ENCODE measurements at regions of chr22 and their contacts with region 1.

Region 1: GRCh38 chr22:36387752-36388518 is at the start of gene MYH9:
- DNase-seq: peak; percentile 100
- ATAC-seq: peak; percentile 85
- H3K4me3 Mint-ChIP-seq: peak within 1 kb of the TSS; percentile 88
- H3K27ac Mint-ChIP-seq: peak within 1 kb of the TSS; percentile 92
- H3K4me1 Mint-ChIP-seq: peaks cover 45% of the 10 kb centered on the region
- H3K27me3 Mint-ChIP-seq: no peaks in the 10 kb centered on the region
- total RNA-seq, gene MYH9: 857 to 883 TPM

Region 2: GRCh38 chr22:36359181-36359996 is 28.5 kb before region 1 on chr22:
- CTCF ChIA-PET with region 1: interaction called, 12 read pairs
- POLR2A ChIA-PET with region 1: interaction called, 15 read pairs
- DNase-seq: no peak
- ATAC-seq: no peak
- H3K4me3 Mint-ChIP-seq: peak overlapping the region; percentile 13
- H3K27ac Mint-ChIP-seq: peak overlapping the region; percentile 74
- H3K4me1 Mint-ChIP-seq: peaks cover 94% of the 10 kb centered on the region
- H3K27me3 Mint-ChIP-seq: no peaks in the 10 kb centered on the region

Region 3: GRCh38 chr22:36365020-36365411 is 22.9 kb before region 1 on chr22:
- CTCF ChIA-PET with region 1: interaction called, 10 read pairs
- POLR2A ChIA-PET with region 1: interaction called, 15 read pairs
- DNase-seq: peak; percentile 93
- ATAC-seq: peak; percentile 84
- H3K4me3 Mint-ChIP-seq: peak overlapping the region; percentile 52
- H3K27ac Mint-ChIP-seq: peak overlapping the region; percentile 88
- H3K4me1 Mint-ChIP-seq: peaks cover 97% of the 10 kb centered on the region
- H3K27me3 Mint-ChIP-seq: no peaks in the 10 kb centered on the region

Region 4: GRCh38 chr22:36369922-36370791 is 17.8 kb before region 1 on chr22:
- CTCF ChIA-PET with region 1: interaction called, 10 read pairs
- POLR2A ChIA-PET with region 1: interaction called, 17 read pairs
- DNase-seq: no peak
- ATAC-seq: peak; percentile 39
- H3K4me3 Mint-ChIP-seq: peak overlapping the region; percentile 78
- H3K27ac Mint-ChIP-seq: peak overlapping the region; percentile 88
- H3K4me1 Mint-ChIP-seq: peaks cover 96% of the 10 kb centered on the region
- H3K27me3 Mint-ChIP-seq: no peaks in the 10 kb centered on the region

Measured in activated CD8-positive, alpha-beta T cell treated with anti-CD3 and anti-CD28 coated beads, Interleukin-2, amount 10 ng/mL, durations not matched to agents 7 days and 5 days (primary cell).